Head of caudate nucleus (tissue), 42 donors: ENCODE measurements at regions of chr7 and their contacts with region 1.

Region 1: DNA sequence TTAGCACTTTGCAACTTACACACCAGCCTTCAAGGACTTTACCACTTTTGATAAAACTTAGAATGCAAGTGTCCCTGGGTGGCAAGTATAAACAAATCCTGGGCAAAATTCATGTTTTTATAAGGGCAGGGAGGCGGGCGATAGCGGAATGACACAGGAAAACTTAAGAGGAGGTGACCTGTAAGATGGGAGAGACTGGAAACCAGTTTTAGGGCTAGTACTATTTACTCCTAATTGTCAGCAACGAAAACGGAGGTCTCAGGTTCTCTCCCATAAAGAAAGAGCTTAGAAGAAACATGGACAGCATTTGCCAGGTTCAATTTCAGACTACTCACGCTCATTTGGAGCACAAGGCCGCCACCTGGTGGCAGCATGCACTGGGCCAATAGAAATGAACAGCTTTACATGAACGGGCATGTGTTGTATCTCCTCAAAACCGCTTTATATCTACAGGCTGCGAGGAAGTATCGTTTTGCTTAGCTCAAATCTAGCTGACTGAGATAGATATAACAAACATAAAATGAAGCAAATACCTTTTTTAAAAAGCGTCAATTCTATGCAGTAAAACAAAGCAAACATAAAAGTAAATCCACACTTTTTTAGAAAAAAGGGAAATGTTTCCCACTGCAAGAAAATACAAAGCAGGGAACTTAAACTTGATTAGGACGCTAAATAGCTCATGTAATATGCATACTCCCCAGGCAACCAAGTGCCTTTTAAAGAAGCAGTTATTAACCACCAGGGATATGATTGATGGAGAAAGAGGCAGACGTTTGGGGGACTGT is 37.6 kb upstream of the SVOPL start:
- DNase-seq: peak; percentile 53 to 97 (median 89)

Region 2: GRCh38 chr7:138161600-138162081 is 577.1 kb before region 1 on chr7:
- intact Hi-C with region 1: loop called (anchors 10 kb)
- DNase-seq: peak; percentile 60 to 94 (median 83)